Transverse colon (tissue), 4 donors: ENCODE measurements at regions of chr2 and their contacts with region 1.

Region 1: DNA sequence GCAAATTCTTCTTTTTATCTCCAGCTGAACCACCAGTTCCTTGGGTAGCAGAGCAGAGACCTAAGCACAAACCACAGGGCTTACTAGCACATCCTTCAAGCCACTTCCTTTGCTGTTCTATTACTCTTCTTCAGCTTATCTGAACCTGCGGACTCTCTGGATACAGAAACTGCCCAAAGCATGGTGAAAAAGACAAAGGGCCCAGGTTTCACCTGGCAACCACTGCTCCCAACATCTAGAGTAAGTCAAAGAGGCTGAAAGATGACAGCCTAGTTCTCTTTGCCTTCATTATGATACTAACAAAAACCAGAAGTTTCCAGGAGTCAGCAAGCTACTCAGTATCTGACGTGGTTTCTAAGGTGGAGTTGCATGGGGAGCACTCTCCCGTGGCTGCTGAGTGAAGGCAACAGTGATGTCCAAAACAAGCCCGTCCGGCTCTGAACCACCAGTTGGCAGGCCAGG is 43.4 kb downstream of the KANSL3 start:
- DNase-seq: no peak
- H3K4me3 ChIP-seq: no peak overlapping the region
- H3K27ac ChIP-seq: peak overlapping the region in 1 of 4 donors; percentile 3
- H3K4me1 ChIP-seq: no peaks in the 10 kb centered on the region
- H3K27me3 ChIP-seq: no peaks in the 10 kb centered on the region
- CTCF ChIP-seq: no peak
- EP300 ChIP-seq: no peak
- POLR2A ChIP-seq: no peak

Region 2: GRCh38 chr2:96651793-96652192 is 57.1 kb after region 1 on chr2:
- in situ Hi-C with region 1: no loop called
- intact Hi-C with region 1: loop called (anchors 2 kb)
- DNase-seq: no peak
- H3K4me3 ChIP-seq: no peak overlapping the region
- H3K27ac ChIP-seq: no peak overlapping the region
- H3K4me1 ChIP-seq: no peaks in the 10 kb centered on the region
- H3K27me3 ChIP-seq: no peaks in the 10 kb centered on the region
- CTCF ChIP-seq: no peak
- EP300 ChIP-seq: no peak
- POLR2A ChIP-seq: no peak